ENCODE measurements at regions of chr5 and their contacts with region 1.

Region 1: DNA sequence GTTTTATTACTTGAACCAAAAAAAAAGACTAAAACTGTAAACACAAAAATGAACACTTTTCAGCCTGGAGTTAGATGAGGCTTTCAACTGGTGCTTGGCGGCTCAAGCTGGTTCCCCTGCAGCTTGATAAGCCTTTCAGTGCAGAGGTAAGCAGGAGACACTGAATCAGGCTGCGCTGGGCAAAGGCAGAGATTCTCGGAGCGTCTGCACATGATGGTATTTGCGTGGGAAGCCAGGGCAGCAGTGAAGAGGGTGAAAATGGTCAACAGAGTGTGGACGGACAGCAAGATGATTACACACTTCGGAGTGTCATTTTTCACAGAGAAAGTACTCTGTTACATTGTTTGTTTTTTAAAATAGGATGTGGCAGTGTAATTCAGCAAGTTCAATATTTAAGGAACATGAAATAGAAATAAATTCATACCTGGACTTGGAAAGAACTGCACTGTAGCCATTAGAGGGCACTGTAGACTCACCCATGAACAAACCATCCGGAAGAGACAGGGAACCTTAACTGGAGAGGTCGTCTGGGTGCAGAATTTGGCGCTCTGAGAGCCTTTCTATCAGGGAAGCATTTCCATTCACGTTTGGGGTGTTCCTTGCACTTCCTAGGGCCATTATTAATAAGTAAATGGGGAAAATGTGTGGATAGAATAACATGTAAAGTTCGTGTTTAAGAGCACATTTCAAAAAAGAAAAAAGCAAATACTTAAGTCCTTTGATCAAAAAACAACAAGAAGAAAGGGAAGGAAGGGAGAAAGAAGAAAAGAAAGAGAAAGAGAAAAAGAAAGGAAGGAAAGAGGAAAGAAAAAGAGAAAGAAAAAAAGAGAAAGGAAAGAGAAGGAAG is 69.8 kb downstream of the ICE1 start:
- DNase-seq: no peak
- ATAC-seq: no peak
- H3K4me3 ChIP-seq: no peak overlapping the region
- H3K27ac ChIP-seq: no peak overlapping the region
- H3K4me1 ChIP-seq: peaks cover 15 to 16% of the 10 kb centered on the region in 2 donors
- H3K27me3 ChIP-seq: no peaks in the 10 kb centered on the region
- CTCF ChIP-seq: peak; percentile 46 to 73 (median 60)
- POLR2A ChIP-seq: no peak

Region 2: GRCh38 chr5:5398046-5398445 is 94.3 kb before region 1 on chr5:
- in situ Hi-C with region 1: no loop called
- intact Hi-C with region 1: no loop called
- DNase-seq: no peak
- ATAC-seq: no peak
- H3K4me3 ChIP-seq: no peak overlapping the region
- H3K27ac ChIP-seq: no peak overlapping the region
- H3K4me1 ChIP-seq: no peaks in the 10 kb centered on the region
- H3K27me3 ChIP-seq: no peaks in the 10 kb centered on the region
- CTCF ChIP-seq: no peak
- POLR2A ChIP-seq: no peak

Region 3: GRCh38 chr5:5658226-5658625 is 165.9 kb after region 1 on chr5:
- in situ Hi-C with region 1: no loop called
- intact Hi-C with region 1: loop called (anchors 10 kb)
- DNase-seq: peak; percentile 31 to 38
- ATAC-seq: peak; percentile 92 to 98
- H3K4me3 ChIP-seq: peak overlapping the region; percentile 9 to 43 (median 14)
- H3K27ac ChIP-seq: peak overlapping the region in 3 of 4 donors; percentile 23 to 41 (median 28)
- H3K4me1 ChIP-seq: peaks cover 4 to 22% of the 10 kb centered on the region in 2 donors
- H3K27me3 ChIP-seq: no peaks in the 10 kb centered on the region
- CTCF ChIP-seq: no peak
- POLR2A ChIP-seq: no peak

Region 4: DNA sequence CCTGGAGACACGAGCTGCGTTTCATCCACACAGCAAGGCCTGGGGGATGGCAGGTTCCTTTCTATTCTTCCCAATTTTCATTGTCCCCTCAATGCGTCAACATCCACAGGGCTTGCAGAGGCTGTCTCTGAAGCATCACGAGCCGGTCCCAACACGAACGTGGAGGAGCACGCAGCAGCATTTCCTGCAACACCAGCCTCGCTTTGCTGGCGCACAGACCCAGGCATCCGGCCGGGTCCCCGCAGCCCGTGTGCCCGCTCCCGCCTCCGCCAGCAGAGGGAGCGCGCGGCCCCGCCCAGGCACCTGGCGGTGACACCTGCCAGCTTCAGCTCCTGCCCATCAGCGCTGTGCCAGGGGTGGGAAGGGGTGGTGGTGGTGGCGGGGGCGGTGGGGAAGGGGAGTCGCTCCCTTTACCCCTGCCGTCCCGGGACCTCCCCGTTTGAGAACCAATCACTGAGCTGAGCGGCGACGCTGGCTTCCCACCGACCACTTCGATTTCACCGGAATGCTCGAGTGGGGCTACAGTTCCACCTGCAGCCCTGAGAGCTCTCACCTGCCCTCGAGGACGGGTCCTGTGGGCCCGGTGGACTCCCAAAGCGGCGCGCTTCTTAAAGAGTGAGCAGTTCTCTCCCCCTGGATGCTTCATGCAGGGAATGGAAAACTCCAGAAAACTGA is 394.6 kb after region 1 on chr5:
- in situ Hi-C with region 1: no loop called
- intact Hi-C with region 1: loop called (anchors 5 kb)
- DNase-seq: peak in 1 of 2 donors; percentile 15
- ATAC-seq: peak; percentile 44 to 58
- H3K4me3 ChIP-seq: no peak overlapping the region
- H3K27ac ChIP-seq: no peak overlapping the region
- H3K4me1 ChIP-seq: no peaks in the 10 kb centered on the region
- H3K27me3 ChIP-seq: peaks cover 0 to 2% (median 0%) of the 10 kb centered on the region in 3 donors
- CTCF ChIP-seq: peak in 4 of 5 experiments; percentile 24 to 81 (median 62)
- POLR2A ChIP-seq: no peak

Region 5: GRCh38 chr5:6377905-6378765 is 885.8 kb after region 1 on chr5 and contains the start of gene MED10:
- in situ Hi-C with region 1: no loop called
- intact Hi-C with region 1: loop called (anchors 5 kb)
- DNase-seq: peak; percentile 89 to 92
- ATAC-seq: peak; percentile 97 to 98
- H3K4me3 ChIP-seq: peak within 1 kb of the TSS; percentile 77 to 97 (median 87)
- H3K27ac ChIP-seq: peak within 1 kb of the TSS; percentile 78 to 92 (median 86)
- H3K4me1 ChIP-seq: peaks cover 17% of the 10 kb centered on the region in 2 donors
- H3K27me3 ChIP-seq: no peaks in the 10 kb centered on the region
- CTCF ChIP-seq: no peak
- POLR2A ChIP-seq: peak; percentile 62 to 79
- total RNA-seq, gene MED10: 15.9 to 37.5 (median 32.2) TPM